ENCODE measurements at regions of chr11 and their contacts with region 1.

Region 1: DNA sequence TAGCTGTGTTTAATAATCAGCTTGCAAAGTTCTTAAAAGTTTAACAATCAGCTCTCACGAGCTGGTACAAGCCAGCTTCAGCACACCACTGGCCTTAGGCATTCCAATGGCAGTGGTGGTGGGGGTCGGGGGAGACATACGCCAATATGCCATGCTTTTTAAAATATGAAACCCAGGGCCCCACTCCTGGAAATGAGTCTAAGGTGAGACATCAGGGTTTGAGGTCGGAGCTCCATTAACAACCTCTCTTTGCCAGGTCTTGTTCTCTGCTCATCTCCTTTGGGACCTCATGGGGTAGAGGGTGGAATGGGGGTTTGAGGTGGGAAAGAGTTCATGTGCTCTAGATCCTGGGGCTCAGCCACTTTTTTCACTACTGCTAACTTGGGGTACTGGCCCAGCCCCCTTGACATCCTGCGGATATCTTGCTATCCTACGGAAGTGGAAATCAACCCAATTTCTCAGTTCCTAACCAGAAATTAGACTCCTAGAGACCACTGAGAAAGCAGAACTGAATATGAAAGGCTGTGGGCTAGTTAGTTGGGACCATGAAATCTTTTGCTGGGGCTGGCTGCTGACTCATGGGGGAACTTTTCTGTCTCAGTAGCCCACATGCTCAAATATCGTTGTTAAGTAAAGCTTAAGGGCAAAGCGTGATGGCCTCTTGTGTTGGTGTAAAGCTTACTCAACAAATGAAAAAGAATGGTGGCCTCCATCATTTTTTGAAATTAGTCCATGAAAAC is 90.1 kb downstream of the PDHX start:
- DNase-seq: peak; percentile 86 to 91 (median 89)
- H3K4me3 ChIP-seq: no peak overlapping the region
- H3K4me3 Mint-ChIP-seq: no peak overlapping the region
- H3K27ac ChIP-seq: peak overlapping the region in 1 of 2 donors; percentile 63
- H3K27ac Mint-ChIP-seq: peak overlapping the region; percentile 62 to 94 (median 83)
- H3K4me1 ChIP-seq: peaks cover 14 to 20% of the 10 kb centered on the region in 2 donors
- H3K4me1 Mint-ChIP-seq: peaks cover 23% of the 10 kb centered on the region
- H3K27me3 ChIP-seq: no peaks in the 10 kb centered on the region
- H3K27me3 Mint-ChIP-seq: no peaks in the 10 kb centered on the region
- CTCF ChIP-seq: no peak

Region 2: DNA sequence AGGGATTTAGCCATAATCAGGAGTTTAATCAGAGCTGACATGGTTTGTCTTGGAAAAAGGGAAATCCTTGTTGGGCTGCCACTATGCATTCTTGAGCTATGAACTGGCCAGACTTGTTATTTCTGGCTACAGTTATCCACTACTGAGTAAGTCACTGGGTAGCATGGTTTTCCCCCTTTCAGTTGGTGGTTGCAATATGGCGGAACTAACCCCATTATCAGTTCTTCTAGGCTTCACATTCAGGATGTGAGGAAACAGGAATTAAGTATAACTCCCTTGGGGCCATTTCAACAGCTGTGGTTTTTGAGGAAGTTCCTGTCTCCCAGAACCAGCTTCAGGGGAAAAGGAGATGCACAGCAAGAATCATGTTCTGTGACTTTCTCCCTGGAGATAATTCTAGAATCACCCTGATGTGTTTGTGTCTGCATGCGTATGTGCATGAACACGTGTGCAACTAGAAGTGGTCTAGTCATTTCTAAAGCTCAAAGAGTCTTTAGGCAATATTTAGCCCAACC is 29.4 kb after region 1 on chr11:
- intact Hi-C with region 1: loop called in 1 of 2 experiments (anchors 5 kb)
- DNase-seq: peak; percentile 90 to 98 (median 97)
- H3K4me3 ChIP-seq: peak overlapping the region in 1 of 3 experiments; percentile 24
- H3K4me3 Mint-ChIP-seq: no peak overlapping the region
- H3K27ac ChIP-seq: peak overlapping the region; percentile 5 to 94
- H3K27ac Mint-ChIP-seq: peak overlapping the region; percentile 89 to 96 (median 94)
- H3K4me1 ChIP-seq: peaks cover 27 to 29% of the 10 kb centered on the region in 2 donors
- H3K4me1 Mint-ChIP-seq: peaks cover 45% of the 10 kb centered on the region
- H3K27me3 ChIP-seq: no peaks in the 10 kb centered on the region
- H3K27me3 Mint-ChIP-seq: no peaks in the 10 kb centered on the region
- CTCF ChIP-seq: no peak

Region 3: GRCh38 chr11:35214792-35215193 is 208.2 kb after region 1 on chr11:
- intact Hi-C with region 1: loop called in 1 of 2 experiments (anchors 10 kb)
- DNase-seq: peak; percentile 92 to 98 (median 93)
- H3K4me3 ChIP-seq: peak overlapping the region in 1 of 3 experiments; percentile 30
- H3K4me3 Mint-ChIP-seq: peak overlapping the region in 1 of 2 donors; percentile 35
- H3K27ac ChIP-seq: peak overlapping the region; percentile 16 to 97
- H3K27ac Mint-ChIP-seq: peak overlapping the region; percentile 95 to 99 (median 98)
- H3K4me1 ChIP-seq: peaks cover 62 to 74% of the 10 kb centered on the region in 2 donors
- H3K4me1 Mint-ChIP-seq: peaks cover 71% of the 10 kb centered on the region
- H3K27me3 ChIP-seq: no peaks in the 10 kb centered on the region
- H3K27me3 Mint-ChIP-seq: no peaks in the 10 kb centered on the region
- CTCF ChIP-seq: no peak

Measured in CD14-positive monocyte (primary cell).